Posterior vena cava (tissue), 2 donors: ENCODE measurements at regions of chr15 and their contacts with region 1.

Region 1: DNA sequence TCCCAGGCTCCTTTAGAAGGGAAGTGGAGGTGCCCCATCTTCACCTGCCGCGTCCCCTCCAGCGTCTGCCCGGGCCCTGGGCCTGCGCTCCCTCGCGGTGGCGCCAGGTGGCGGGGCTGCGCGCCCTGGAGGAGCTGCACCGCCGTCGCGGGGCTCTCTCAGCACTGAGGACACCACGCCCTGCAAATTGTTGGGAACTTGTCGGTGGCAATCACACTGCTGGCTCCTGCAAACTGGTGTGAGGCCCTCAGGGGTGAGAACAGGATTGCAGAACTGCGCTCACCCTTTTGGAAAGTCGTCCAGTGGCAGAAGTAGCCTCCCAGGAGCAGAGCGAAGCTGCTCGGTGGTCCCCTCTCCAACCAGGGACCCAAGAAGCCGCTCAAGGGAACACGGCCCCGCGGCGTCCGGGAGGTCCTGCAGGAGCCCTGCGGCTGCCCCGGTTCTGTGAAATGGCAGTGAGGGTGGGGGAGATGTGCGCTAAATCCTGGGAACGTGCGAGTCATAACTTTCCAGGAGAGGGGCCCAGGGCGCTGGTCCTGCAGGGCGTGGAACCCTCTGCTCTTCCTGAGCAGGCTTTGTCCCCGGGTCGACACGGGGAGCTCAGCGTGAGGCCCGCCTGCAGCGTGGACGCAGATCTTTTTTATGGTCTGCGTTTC is 995 bp upstream of the LRRK1 start:
- DNase-seq: peak; percentile 94

Region 2: GRCh38 chr15:100284701-100285100 is 633.5 kb before region 1 on chr15:
- intact Hi-C with region 1: no loop called
- DNase-seq: no peak

Region 3: GRCh38 chr15:101008158-101009139 is 90.3 kb after region 1 on chr15:
- intact Hi-C with region 1: loop called (anchors 5 kb)
- DNase-seq: peak; percentile 95